Breast epithelium (tissue), 4 donors: ENCODE measurements at regions of chr16 and their contacts with region 1.

Region 1: DNA sequence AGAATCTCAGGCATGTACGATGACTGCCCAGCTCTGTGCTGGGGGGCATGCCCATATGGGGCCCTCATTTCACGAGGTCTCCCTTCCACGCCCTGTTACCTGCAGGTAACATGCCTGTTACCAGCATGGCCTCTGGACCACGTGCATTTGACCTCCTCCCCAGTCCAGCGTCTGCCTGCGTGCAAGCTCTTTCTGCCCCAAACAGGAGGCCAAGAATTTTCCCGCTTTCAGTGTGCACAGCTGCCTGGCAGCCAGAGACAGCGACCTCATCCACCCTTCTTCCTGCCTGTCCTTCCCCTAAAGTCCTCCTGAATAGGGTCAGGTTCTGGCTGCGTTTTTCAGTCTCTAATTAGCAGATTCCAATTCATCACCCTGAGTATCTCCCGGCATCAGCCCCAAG is 306.5 kb upstream of the ZFHX3 start:
- DNase-seq: no peak
- H3K4me3 ChIP-seq: no peak overlapping the region
- H3K27ac ChIP-seq: no peak overlapping the region
- H3K4me1 ChIP-seq: no peaks in the 10 kb centered on the region
- H3K27me3 ChIP-seq: peaks cover 0 to 3% of the 10 kb centered on the region in 2 donors
- CTCF ChIP-seq: no peak
- POLR2A ChIP-seq: no peak

Region 2: GRCh38 chr16:73703895-73704294 is 349.5 kb after region 1 on chr16:
- intact Hi-C with region 1: no loop called
- DNase-seq: no peak
- H3K4me3 ChIP-seq: no peak overlapping the region
- H3K27ac ChIP-seq: no peak overlapping the region
- H3K4me1 ChIP-seq: no peaks in the 10 kb centered on the region
- H3K27me3 ChIP-seq: no peaks in the 10 kb centered on the region
- CTCF ChIP-seq: no peak
- POLR2A ChIP-seq: no peak

Region 3: DNA sequence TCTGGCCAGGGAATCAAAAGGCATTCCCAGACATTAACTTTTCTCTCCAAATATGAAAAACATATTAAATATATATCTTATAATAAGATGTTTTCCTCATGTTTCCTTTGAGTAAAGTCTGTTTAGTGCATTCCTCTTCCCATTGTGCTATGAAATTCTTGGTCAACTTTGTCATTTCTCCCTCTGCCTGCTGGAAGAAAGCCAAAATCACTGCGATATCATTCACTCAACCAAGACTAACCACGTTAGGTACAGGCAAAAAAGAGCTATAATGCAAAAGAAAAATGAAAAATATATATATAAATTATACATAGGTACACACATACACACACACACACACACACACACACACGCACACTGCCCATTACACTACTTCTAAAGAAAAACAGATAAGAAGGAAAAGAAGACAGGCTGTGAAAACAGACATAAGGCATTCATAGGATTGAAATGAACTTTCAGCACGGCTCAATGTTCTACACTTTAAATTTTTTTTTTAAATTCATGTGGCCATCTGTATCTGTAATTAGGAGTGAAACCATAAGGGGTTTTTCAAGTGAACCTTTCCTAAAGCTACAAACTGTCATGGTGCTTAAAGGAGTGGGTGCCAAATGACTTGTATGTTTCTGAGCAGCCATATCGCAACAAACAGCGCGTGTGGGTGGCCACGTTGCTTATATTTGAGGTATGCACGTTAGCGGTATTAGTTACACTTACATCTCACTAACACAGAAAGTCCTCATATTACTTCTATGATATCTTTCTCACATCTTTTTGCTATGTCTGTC is 870.6 kb after region 1 on chr16:
- intact Hi-C with region 1: loop called (anchors 5 kb)
- DNase-seq: no peak
- H3K4me3 ChIP-seq: no peak overlapping the region
- H3K27ac ChIP-seq: no peak overlapping the region
- H3K4me1 ChIP-seq: no peaks in the 10 kb centered on the region
- H3K27me3 ChIP-seq: no peaks in the 10 kb centered on the region
- CTCF ChIP-seq: no peak
- POLR2A ChIP-seq: no peak